Cardiac septum (tissue), 1 donor: ENCODE measurements at regions of chr1 and their contacts with region 1.

Region 1: GRCh38 chr1:32925403-32926162 is 24.4 kb upstream of the TMEM54 start:
- DNase-seq: no peak

Region 2: DNA sequence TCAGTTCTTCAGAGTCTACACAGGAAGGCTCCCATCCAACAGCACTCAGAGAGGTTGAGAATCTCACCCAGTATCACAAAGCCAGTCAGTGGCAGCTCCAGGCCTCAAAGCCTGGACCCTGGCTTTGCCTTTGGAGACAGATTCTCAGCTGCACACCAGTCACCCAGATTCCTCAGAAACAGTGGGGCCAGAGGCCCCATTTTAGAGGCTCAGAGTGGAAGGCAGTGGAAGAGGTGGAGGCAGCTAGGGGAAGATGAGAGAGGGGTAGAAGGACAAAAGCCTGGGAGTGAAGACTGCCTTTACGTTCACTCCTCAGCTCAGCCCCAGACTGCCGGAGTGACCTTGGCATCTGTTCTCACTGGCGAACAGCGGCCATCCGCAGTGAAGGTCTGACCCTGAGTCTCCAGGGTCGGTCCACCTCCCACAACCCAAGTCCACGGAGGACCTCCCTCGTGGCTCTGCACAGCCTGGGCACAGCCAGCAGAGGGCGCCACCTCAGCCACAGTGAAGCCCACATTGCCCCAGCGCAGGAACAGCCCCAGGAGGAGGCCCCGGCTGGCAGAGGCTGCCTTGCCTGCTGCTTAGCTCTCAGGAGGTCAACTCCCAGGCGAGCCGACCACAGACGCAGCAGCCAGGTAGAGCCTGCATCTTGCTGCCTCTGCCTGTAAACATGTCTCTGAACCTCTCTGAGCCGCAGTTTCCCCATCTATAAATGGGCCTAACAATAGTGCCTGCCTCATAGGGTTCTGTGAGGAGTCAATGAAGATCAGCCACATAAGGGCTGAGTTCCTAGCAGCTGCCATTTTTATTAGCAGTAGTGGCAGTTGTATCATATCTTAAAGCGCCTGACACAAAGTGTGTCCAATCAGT is 49.0 kb before region 1 on chr1:
- intact Hi-C with region 1: loop called (anchors 5 kb)
- DNase-seq: peak; percentile 85

Region 3: DNA sequence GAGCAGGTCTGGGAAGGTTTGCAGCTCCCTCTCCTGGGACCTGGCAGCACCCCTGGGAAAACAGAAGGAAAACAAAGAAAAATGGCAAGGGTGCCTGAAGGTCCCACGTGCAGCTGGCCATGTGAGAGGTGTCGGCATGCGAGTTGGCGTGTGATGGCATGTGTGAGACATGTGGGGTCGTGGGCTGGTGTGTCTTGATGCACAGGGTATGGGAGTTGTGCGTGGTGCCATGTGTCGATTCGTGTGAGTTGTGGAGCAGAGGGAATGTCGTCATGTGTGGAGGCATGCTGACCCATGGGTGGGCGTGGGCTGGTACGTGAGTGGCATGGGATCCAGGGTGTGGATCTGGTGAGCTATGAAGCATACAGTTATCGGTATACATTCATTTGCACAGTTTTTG is 38.0 kb before region 1 on chr1:
- intact Hi-C with region 1: loop called (anchors 2 kb)
- DNase-seq: no peak